Endothelial cell of umbilical vein (primary cell): ENCODE measurements at regions of chr9 and their contacts with region 1.

Region 1: GRCh38 chr9:32378993-32379729 is 5.3 kb upstream of the ACO1 start:
- DNase-seq: peak; percentile 83
- H3K4me3 ChIP-seq: no peak overlapping the region
- H3K27ac ChIP-seq: no peak overlapping the region
- H3K4me1 ChIP-seq: peaks cover 15% of the 10 kb centered on the region
- H3K27me3 ChIP-seq: peaks cover 0 to 5% of the 10 kb centered on the region in 2 experiments
- CTCF ChIP-seq: peak; percentile 60 to 72
- POLR2A ChIP-seq: no peak

Region 2: DNA sequence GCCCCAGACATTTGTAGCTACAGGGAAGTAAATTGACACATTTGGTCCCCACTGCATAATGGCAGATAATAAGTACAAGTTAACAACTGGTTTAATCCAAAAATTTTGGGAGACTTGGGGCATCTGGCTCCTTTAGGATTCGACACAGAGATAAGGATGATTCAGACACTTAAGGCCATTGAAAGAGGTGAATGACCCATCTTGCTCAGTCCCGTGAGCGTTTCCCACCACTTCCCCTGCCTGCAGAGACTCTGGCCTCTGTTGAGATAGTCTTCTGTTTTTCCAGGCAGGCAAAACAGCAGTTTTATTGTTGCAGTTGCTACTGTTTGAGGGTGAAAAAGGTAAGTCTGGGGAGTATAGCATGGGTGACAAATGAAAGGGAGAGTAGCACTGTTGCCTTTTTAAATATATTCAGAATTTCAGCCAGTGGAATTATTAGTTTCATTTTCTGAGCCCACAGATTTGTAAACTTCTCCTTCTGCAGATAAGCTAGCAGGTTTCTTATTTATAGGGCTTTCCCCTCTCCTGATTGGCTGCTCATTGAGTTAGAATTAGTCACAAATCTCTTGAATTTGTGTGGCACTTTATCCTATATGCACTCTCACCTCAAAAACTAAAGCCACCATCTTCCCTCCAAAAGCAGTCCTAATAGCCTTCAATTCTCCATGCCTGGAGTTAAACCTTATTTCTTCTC is 24.6 kb after region 1 on chr9:
- CTCF ChIA-PET with region 1: interaction called, 71 read pairs
- POLR2A ChIA-PET with region 1: no interaction called
- dilution Hi-C with region 1: no loop called
- intact Hi-C with region 1: no loop called
- DNase-seq: no peak
- H3K4me3 ChIP-seq: no peak overlapping the region
- H3K27ac ChIP-seq: no peak overlapping the region
- H3K4me1 ChIP-seq: peaks cover 3% of the 10 kb centered on the region
- H3K27me3 ChIP-seq: no peaks in the 10 kb centered on the region
- CTCF ChIP-seq: no peak
- POLR2A ChIP-seq: no peak

Region 3: GRCh38 chr9:32431940-32432555 is 52.9 kb after region 1 on chr9:
- CTCF ChIA-PET with region 1: interaction called, 383 read pairs
- POLR2A ChIA-PET with region 1: interaction called, 8 read pairs
- dilution Hi-C with region 1: no loop called
- intact Hi-C with region 1: loop called (anchors 1 kb)
- DNase-seq: peak; percentile 54
- H3K4me3 ChIP-seq: no peak overlapping the region
- H3K27ac ChIP-seq: peak overlapping the region; percentile 93
- H3K4me1 ChIP-seq: peaks cover 34% of the 10 kb centered on the region
- H3K27me3 ChIP-seq: no peaks in the 10 kb centered on the region
- CTCF ChIP-seq: peak; percentile 63 to 67
- POLR2A ChIP-seq: no peak

Region 4: DNA sequence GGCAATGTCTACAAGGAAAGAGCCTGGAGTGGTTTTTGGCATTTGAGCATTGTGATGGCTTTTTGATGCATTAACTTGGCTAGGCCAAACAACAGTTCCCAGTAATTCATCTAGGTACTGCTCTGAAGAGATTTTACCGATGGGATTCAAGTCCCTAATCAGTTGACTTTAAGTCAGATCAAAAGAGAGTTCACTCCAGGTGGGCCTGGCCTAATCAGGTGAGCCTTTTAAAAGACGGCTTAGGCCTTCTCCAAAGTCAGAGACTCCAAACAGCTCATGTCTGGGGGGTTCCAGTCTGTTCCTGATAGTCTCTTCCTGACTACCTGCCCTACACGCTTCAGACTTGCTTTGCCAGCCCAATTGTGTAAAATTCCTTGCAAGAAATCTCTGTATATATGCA is 93.2 kb after region 1 on chr9:
- CTCF ChIA-PET with region 1: interaction called, 16 read pairs
- POLR2A ChIA-PET with region 1: no interaction called
- dilution Hi-C with region 1: no loop called
- intact Hi-C with region 1: no loop called
- DNase-seq: no peak
- H3K4me3 ChIP-seq: no peak overlapping the region
- H3K27ac ChIP-seq: no peak overlapping the region
- H3K4me1 ChIP-seq: no peaks in the 10 kb centered on the region
- H3K27me3 ChIP-seq: no peaks in the 10 kb centered on the region
- CTCF ChIP-seq: no peak
- POLR2A ChIP-seq: no peak

Region 5: GRCh38 chr9:32550562-32551433 is 171.6 kb after region 1 on chr9:
- CTCF ChIA-PET with region 1: interaction called, 45 read pairs
- POLR2A ChIA-PET with region 1: no interaction called
- dilution Hi-C with region 1: loop called (anchors 25 kb)
- intact Hi-C with region 1: loop called (anchors 1 kb)
- DNase-seq: peak; percentile 98
- H3K4me3 ChIP-seq: peak overlapping the region; percentile 71 to 88 (median 77)
- H3K27ac ChIP-seq: peak overlapping the region; percentile 92
- H3K4me1 ChIP-seq: peaks cover 17% of the 10 kb centered on the region
- H3K27me3 ChIP-seq: no peaks in the 10 kb centered on the region
- CTCF ChIP-seq: peak in 1 of 2 donors; percentile 22
- POLR2A ChIP-seq: no peak

Region 6: GRCh38 chr9:32579706-32580331 is 200.7 kb after region 1 on chr9:
- CTCF ChIA-PET with region 1: interaction called, 1,384 read pairs
- POLR2A ChIA-PET with region 1: interaction called, 3 read pairs
- dilution Hi-C with region 1: no loop called
- intact Hi-C with region 1: loop called (anchors 1 kb)
- DNase-seq: peak; percentile 67
- H3K4me3 ChIP-seq: no peak overlapping the region
- H3K27ac ChIP-seq: no peak overlapping the region
- H3K4me1 ChIP-seq: peaks cover 9% of the 10 kb centered on the region
- H3K27me3 ChIP-seq: peaks cover 8 to 10% of the 10 kb centered on the region in 2 experiments
- CTCF ChIP-seq: peak; percentile 85 to 89
- POLR2A ChIP-seq: no peak

Region 7: GRCh38 chr9:32968101-32969011 is 589.2 kb after region 1 on chr9:
- CTCF ChIA-PET with region 1: interaction called, 173 read pairs
- POLR2A ChIA-PET with region 1: no interaction called
- dilution Hi-C with region 1: no loop called
- intact Hi-C with region 1: loop called (anchors 1 kb)
- DNase-seq: peak; percentile 72
- H3K4me3 ChIP-seq: no peak overlapping the region
- H3K27ac ChIP-seq: no peak overlapping the region
- H3K4me1 ChIP-seq: peaks cover 6% of the 10 kb centered on the region
- H3K27me3 ChIP-seq: no peaks in the 10 kb centered on the region
- CTCF ChIP-seq: peak; percentile 50 to 63
- POLR2A ChIP-seq: no peak